ENCODE measurements at regions of chr3 and their contacts with region 1.

Region 1: GRCh38 chr3:195909644-195910508 is 1.5 kb upstream of the TNK2 start:
- DNase-seq: peak; percentile 76 to 95 (median 85)
- ATAC-seq: peak; percentile 65 to 80 (median 74)
- H3K4me3 ChIP-seq: peak overlapping the region; percentile 45 to 49
- H3K4me3 Mint-ChIP-seq: peak overlapping the region; percentile 68 to 99 (median 75)
- H3K27ac ChIP-seq: peak overlapping the region; percentile 62
- H3K27ac Mint-ChIP-seq: peak overlapping the region; percentile 57 to 82
- H3K4me1 ChIP-seq: peaks cover 23 to 46% of the 10 kb centered on the region in 2 experiments
- H3K4me1 Mint-ChIP-seq: peaks cover 37 to 41% (median 38%) of the 10 kb centered on the region in 3 donors
- H3K27me3 ChIP-seq: no peaks in the 10 kb centered on the region
- H3K27me3 Mint-ChIP-seq: no peaks in the 10 kb centered on the region

Region 2: DNA sequence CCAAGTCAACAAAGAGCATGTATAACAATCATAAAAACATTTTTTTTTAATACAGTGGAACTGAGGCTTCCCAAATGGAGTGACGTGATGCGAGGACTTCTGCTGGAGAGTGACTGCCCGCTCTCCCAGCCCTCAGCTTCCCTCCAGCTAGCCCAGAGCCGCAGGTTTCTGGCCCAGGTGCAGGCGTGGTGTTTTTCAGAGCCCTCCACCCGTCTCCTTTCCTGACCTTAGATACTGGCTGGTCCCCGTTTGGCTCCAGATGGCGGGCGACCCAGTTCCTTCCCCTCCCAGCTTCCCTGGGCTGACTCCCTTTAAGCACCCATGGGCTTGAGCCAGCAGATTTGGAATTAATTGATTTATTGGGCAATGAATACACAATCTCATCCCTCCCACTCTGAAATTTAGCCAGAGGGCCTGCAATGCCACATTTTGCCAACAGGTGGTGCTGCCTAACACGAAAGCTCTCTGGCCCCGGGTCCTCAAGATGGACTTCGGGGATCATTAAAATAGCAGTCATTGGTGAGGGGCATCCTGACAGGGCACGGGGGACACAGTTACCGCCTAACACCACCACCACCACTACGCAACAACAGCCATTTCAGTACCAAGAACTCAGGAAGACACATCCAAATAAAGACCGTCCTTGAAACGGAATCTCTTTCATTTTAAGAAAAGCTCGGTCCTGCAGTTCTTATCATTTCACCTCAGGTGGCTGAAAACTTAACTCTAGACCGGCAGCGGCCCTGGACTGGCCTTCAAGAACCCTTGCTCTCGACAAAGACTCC is 50.6 kb before region 1 on chr3:
- CTCF ChIA-PET with region 1: interaction called, 4 to 17 read pairs
- POLR2A ChIA-PET with region 1: no interaction called
- DNase-seq: peak; percentile 16 to 83 (median 62)
- ATAC-seq: peak; percentile 57 to 71 (median 64)
- H3K4me3 ChIP-seq: peak overlapping the region in 1 of 2 donors; percentile 56
- H3K4me3 Mint-ChIP-seq: peak overlapping the region in 2 of 3 donors; percentile 58 to 62
- H3K27ac ChIP-seq: no peak overlapping the region
- H3K27ac Mint-ChIP-seq: no peak overlapping the region
- H3K4me1 ChIP-seq: peaks cover 0 to 7% of the 10 kb centered on the region in 2 experiments
- H3K4me1 Mint-ChIP-seq: peaks cover 4 to 7% (median 6%) of the 10 kb centered on the region in 3 donors
- H3K27me3 ChIP-seq: peaks cover 0 to 12% of the 10 kb centered on the region in 2 experiments
- H3K27me3 Mint-ChIP-seq: peaks cover 0 to 1% of the 10 kb centered on the region in 2 donors

Region 3: DNA sequence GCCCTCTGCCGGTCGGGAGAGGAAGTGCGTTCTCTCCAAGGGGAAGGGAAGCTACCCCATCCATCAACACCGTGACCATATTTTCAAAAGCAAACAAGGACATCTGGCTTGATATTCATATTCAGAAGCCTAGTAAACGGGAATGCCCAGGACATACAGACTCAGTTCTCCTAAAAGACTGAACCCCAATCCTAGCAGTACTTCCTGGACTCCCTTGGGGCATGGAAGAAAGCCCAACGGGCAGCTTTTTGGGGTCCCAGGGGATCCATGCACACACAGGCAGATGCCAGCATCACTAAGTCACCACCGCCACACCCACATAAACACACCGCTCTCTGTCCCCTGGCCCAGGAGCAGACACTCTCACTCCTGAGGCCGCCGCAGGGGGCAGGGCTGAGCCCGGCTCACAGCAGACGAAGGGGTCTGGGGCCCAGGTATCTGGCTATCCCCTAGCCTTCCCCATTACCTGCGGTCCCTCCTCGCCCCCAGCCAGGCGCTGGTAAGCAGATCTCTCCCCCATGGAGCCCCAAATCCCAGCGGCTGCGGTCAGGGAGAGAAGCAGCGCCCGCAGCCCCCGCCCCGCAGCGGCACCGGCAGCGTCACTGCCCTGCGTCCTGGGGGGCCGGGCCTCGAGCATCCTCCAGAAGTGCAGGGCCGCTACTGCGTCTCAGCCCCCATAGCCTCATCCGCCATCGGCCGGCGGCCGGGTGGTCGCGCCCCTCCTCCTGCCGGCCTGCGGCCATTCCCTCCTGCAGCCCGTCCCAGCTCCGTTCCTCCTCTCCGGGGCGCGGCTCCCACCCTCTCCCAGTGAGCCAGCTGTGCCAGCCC is 14.9 kb before region 1 on chr3:
- CTCF ChIA-PET with region 1: interaction called, 13 to 42 read pairs
- POLR2A ChIA-PET with region 1: interaction called, 5 read pairs
- DNase-seq: peak; percentile 37 to 85 (median 57)
- ATAC-seq: peak; percentile 56 to 70 (median 67)
- H3K4me3 ChIP-seq: peak overlapping the region; percentile 70 to 71
- H3K4me3 Mint-ChIP-seq: peak overlapping the region; percentile 89 to 93 (median 92)
- H3K27ac ChIP-seq: peak overlapping the region; percentile 60
- H3K27ac Mint-ChIP-seq: peak overlapping the region; percentile 87 to 90
- H3K4me1 ChIP-seq: peaks cover 7 to 69% of the 10 kb centered on the region in 2 experiments
- H3K4me1 Mint-ChIP-seq: peaks cover 47 to 60% (median 50%) of the 10 kb centered on the region in 3 donors
- H3K27me3 ChIP-seq: no peaks in the 10 kb centered on the region
- H3K27me3 Mint-ChIP-seq: no peaks in the 10 kb centered on the region

Region 4: DNA sequence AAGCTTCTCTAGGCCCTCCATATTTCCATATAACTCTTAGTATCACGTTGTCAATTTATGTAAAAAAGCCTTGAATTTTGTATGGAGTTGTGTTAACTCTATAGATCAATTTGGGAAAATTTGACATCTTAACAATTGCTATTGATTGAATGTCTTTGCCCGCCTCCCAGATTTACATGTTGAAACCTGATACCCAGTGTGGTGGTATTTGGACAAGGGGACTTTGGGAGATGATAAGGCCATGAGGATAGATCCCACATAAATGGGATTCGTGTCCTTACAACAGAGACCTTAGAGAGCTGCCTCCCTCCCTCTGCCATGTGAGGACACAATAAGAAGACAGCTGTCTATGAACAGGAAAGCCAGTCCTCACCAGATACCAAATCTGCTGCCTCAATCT is 19.6 kb after region 1 on chr3:
- CTCF ChIA-PET with region 1: no interaction called
- POLR2A ChIA-PET with region 1: no interaction called
- DNase-seq: no peak
- ATAC-seq: no peak
- H3K4me3 ChIP-seq: no peak overlapping the region
- H3K4me3 Mint-ChIP-seq: no peak overlapping the region
- H3K27ac ChIP-seq: no peak overlapping the region
- H3K27ac Mint-ChIP-seq: no peak overlapping the region
- H3K4me1 ChIP-seq: no peaks in the 10 kb centered on the region
- H3K4me1 Mint-ChIP-seq: no peaks in the 10 kb centered on the region
- H3K27me3 ChIP-seq: no peaks in the 10 kb centered on the region
- H3K27me3 Mint-ChIP-seq: no peaks in the 10 kb centered on the region

Region 5: DNA sequence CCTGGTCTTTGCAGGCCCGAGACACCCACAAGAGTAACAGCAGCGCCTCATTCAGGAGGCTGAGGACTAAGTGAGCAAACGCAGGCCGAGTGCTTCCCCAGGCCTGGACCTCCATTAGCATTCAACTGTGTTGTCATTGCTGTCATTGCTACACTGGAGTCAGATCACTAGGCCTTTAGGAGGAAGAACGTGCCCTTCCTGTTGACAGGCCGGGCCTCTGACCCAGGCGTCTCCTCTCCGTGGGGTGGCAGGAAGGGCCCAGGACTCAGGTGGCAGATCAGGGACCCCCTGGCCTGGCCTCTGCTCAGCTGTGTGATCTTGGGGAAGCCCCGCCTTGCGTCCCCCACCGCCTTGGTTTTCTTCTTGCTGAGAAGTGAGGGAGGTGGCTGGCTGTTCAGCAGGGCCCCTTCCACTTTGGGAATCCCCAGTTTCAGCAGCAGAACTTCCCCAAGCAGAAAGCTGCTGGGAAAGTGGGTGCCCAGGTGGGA is 282.2 kb after region 1 on chr3:
- CTCF ChIA-PET with region 1: no interaction called
- POLR2A ChIA-PET with region 1: no interaction called
- DNase-seq: peak in 31 of 35 experiments; percentile 27 to 80 (median 41)
- ATAC-seq: peak; percentile 28 to 74 (median 52)
- H3K4me3 ChIP-seq: peak overlapping the region in 1 of 2 donors; percentile 5
- H3K4me3 Mint-ChIP-seq: peak overlapping the region in 2 of 3 donors; percentile 65 to 70
- H3K27ac ChIP-seq: peak overlapping the region; percentile 84
- H3K27ac Mint-ChIP-seq: peak overlapping the region; percentile 96
- H3K4me1 ChIP-seq: peaks cover 11 to 52% of the 10 kb centered on the region in 2 experiments
- H3K4me1 Mint-ChIP-seq: peaks cover 23 to 46% (median 24%) of the 10 kb centered on the region in 3 donors
- H3K27me3 ChIP-seq: no peaks in the 10 kb centered on the region
- H3K27me3 Mint-ChIP-seq: no peaks in the 10 kb centered on the region

Region 6: GRCh38 chr3:196506687-196507086 is 596.8 kb after region 1 on chr3:
- CTCF ChIA-PET with region 1: interaction called in 1 of 2 experiments, 10 read pairs
- POLR2A ChIA-PET with region 1: no interaction called
- DNase-seq: no peak
- ATAC-seq: no peak
- H3K4me3 ChIP-seq: no peak overlapping the region
- H3K4me3 Mint-ChIP-seq: no peak overlapping the region
- H3K27ac ChIP-seq: no peak overlapping the region
- H3K27ac Mint-ChIP-seq: no peak overlapping the region
- H3K4me1 ChIP-seq: peaks cover under 1 to 18% of the 10 kb centered on the region in 2 experiments
- H3K4me1 Mint-ChIP-seq: peaks cover 3 to 11% (median 9%) of the 10 kb centered on the region in 3 donors
- H3K27me3 ChIP-seq: no peaks in the 10 kb centered on the region
- H3K27me3 Mint-ChIP-seq: no peaks in the 10 kb centered on the region

Measured in T-cell (primary cell).